ENCODE measurements at regions of chr7 and their contacts with region 1.

Region 1: DNA sequence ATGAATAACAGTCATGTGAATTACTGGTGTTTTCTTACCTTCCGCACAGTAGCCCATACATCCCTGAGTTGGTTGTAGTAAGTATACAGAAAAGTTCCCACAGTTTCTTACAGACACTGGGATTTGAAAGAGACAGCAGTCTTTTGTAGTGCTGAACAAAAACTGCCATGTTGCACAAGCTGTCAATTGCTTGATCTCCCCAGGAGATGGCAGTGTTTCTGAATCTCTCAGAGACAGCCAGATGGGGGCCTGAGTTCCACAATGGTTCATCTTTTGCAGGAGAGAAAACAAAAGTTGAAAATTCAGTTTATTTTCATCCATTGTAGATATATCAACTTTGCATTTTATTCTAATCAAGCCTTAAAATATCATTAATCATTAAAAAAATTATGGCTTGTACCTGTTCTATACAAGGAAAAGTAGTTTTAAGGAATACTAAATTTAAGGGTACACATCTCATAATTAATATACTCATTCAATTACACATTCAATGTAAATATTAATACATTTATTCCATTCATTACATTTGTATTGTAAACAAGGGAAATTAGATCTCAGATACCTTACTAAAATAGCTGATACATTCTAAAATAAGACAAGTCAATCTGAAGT is 14.5 kb downstream of the VWDE start:
- DNase-seq: peak; percentile 72
- H3K4me3 Mint-ChIP-seq: no peak overlapping the region
- H3K27ac Mint-ChIP-seq: no peak overlapping the region
- H3K4me1 Mint-ChIP-seq: no peaks in the 10 kb centered on the region
- H3K27me3 Mint-ChIP-seq: no peaks in the 10 kb centered on the region
- CTCF ChIP-seq: peak; percentile 84

Region 2: GRCh38 chr7:11078247-11078834 is 1310.9 kb before region 1 on chr7:
- CTCF ChIA-PET with region 1: no interaction called
- POLR2A ChIA-PET with region 1: no interaction called
- intact Hi-C with region 1: no loop called
- DNase-seq: no peak
- H3K4me3 Mint-ChIP-seq: no peak overlapping the region
- H3K27ac Mint-ChIP-seq: no peak overlapping the region
- H3K4me1 Mint-ChIP-seq: peaks cover 11% of the 10 kb centered on the region
- H3K27me3 Mint-ChIP-seq: no peaks in the 10 kb centered on the region
- CTCF ChIP-seq: no peak

Region 3: DNA sequence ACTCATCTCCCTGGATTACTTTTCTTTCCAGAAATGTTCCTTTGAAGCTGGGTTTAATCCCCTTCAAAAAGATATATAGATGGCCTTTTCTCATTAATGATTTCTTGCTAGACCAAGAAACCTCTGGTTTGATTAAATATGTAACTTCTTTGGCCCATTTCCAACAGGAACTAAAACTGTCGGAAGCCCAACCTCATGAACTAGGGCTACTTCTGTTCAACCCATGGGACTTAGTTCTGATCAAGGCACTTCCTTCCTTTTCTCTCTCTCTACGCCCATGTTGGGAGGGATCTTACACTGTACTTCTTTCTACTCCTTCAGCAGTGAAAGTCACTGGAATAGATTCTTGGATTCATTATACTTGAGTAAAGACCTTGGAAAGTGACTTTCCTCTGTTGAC is 94.5 kb before region 1 on chr7:
- CTCF ChIA-PET with region 1: no interaction called
- POLR2A ChIA-PET with region 1: no interaction called
- intact Hi-C with region 1: no loop called
- DNase-seq: no peak
- H3K4me3 Mint-ChIP-seq: no peak overlapping the region
- H3K27ac Mint-ChIP-seq: no peak overlapping the region
- H3K4me1 Mint-ChIP-seq: no peaks in the 10 kb centered on the region
- H3K27me3 Mint-ChIP-seq: no peaks in the 10 kb centered on the region
- CTCF ChIP-seq: no peak

Region 4: DNA sequence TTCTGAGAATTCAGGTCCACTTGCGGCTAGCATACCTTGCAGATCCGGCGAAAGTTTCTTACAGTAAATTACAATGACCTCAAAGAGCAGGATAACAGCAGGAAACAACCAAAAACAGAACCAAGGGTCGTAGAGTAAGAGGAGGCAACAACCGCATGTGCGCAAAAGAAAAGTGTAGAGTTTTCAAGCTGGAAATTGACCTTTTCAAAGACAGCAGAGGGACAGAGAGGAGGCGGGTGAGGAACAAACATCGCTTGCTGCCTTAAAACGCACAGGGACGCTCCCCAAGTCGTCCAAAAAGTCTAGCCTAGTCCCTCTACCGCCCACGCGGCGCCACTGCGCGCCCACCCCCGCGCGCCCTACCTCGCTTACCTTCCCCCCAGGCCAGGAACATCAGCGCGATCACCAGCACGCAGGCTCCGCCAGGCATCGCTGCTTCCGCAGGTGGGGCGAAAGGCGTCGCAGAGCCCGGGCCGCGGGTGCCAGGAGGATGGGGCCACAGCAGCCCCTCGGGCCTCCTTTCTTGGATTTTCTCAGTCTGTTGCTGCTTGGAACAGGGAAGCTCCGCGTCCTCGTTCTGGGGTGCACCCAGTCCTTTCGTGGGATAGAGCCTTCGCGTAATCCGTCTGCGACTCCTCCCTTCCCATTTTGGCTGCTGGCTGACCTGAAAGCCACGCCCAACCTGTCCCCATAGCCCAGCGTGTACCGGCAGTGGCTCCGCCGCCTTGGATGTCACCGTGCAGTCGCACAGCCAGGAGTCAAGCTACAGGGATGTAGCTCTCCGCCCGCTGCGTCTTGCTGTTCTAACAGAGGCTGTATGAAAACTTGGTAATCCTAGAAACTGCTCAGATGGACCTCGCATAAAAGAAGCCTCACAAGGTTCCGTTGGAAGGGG is 14.3 kb after region 1 on chr7 and contains the start of gene VWDE:
- CTCF ChIA-PET with region 1: interaction called, 5 read pairs
- POLR2A ChIA-PET with region 1: interaction called, 10 read pairs
- intact Hi-C with region 1: no loop called
- DNase-seq: peak; percentile 49
- H3K4me3 Mint-ChIP-seq: peak within 1 kb of the TSS; percentile 75
- H3K27ac Mint-ChIP-seq: peak within 1 kb of the TSS; percentile 20
- H3K4me1 Mint-ChIP-seq: no peaks in the 10 kb centered on the region
- H3K27me3 Mint-ChIP-seq: peaks cover 16% of the 10 kb centered on the region
- CTCF ChIP-seq: no peak
- total RNA-seq, gene VWDE: 3.0 and 3.1 TPM in 2 replicates

Region 5: GRCh38 chr7:12436896-12437535 is 47.8 kb after region 1 on chr7:
- CTCF ChIA-PET with region 1: interaction called, 5 read pairs
- POLR2A ChIA-PET with region 1: no interaction called
- intact Hi-C with region 1: loop called (anchors 10 kb)
- DNase-seq: peak; percentile 26
- H3K4me3 Mint-ChIP-seq: no peak overlapping the region
- H3K27ac Mint-ChIP-seq: no peak overlapping the region
- H3K4me1 Mint-ChIP-seq: peaks cover 9% of the 10 kb centered on the region
- H3K27me3 Mint-ChIP-seq: peaks cover 10% of the 10 kb centered on the region
- CTCF ChIP-seq: no peak

Region 6: GRCh38 chr7:12929476-12930140 is 540.4 kb after region 1 on chr7:
- CTCF ChIA-PET with region 1: no interaction called
- POLR2A ChIA-PET with region 1: no interaction called
- intact Hi-C with region 1: no loop called
- DNase-seq: no peak
- H3K4me3 Mint-ChIP-seq: no peak overlapping the region
- H3K27ac Mint-ChIP-seq: no peak overlapping the region
- H3K4me1 Mint-ChIP-seq: peaks cover 17% of the 10 kb centered on the region
- H3K27me3 Mint-ChIP-seq: no peaks in the 10 kb centered on the region
- CTCF ChIP-seq: no peak